ENCODE measurements at regions of chr3 and their contacts with region 1.

Region 1: DNA sequence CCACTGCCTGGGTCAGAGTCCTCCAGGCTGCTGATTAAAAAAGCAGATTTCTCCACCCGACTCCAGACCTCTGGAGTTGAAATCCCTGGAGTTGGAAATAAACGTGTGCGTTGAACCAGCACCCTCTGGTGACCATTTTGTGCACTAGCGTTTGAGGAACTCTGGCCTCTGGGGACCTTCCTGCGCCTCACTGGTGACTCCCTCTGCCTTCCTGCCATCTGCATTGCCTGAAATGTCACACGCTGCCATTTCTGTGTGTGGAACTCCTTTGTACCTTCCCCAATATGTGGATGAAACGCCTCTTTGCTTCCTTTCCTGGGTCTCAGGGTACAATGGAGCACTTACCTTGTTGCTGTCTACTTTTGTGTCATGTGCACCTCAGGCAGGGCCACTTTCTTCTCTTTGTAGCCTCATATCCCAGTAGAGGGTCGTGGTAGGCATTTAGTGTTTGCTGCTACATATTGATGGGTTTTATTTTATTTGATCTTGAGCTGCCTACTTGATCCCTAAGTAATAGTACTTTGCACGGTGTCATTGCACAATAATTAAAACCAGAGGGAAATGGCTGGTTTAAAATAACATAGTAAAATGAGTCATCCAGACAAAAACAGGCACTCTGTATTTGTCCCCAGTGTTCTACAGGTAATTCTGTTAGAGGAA is 56.8 kb downstream of the GPR171 start:
- DNase-seq: peak; percentile 25
- ATAC-seq: peak; percentile 94
- H3K4me3 ChIP-seq: no peak overlapping the region
- H3K27ac ChIP-seq: no peak overlapping the region
- H3K4me1 ChIP-seq: no peaks in the 10 kb centered on the region
- H3K27me3 ChIP-seq: peaks cover 2 to 3% of the 10 kb centered on the region in 2 experiments
- CTCF ChIP-seq: peak; percentile 83 to 90 (median 83)
- EP300 ChIP-seq: no peak
- POLR2A ChIP-seq: no peak
- RAD21 ChIP-seq: peak; percentile 74

Region 2: DNA sequence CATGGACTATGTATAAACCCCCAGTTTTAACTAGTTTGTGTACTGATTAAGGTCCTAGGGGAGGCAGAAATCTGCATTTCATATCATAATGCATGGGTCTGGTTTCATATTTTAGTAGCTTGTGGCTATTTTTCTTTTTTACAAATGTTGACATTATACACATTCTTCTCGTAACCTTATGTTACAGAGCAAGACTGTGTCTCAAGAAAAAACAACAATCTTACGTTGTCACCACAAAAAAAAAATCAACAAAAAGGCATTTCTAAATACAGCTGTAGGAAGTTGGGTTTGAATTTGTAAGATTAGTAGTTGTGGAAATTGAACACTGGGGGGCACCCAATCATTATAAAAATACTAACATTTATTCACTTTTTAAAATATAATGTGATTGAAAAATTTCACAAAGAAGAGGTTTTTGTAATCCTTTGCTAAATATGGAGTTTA is 617.8 kb before region 1 on chr3:
- CTCF ChIA-PET with region 1: interaction called, 3 read pairs
- POLR2A ChIA-PET with region 1: no interaction called
- RAD21 ChIA-PET with region 1: no interaction called
- SMC1A ChIA-PET with region 1: interaction called, 3 read pairs
- in situ Hi-C with region 1: loop called (anchors 25 kb)
- intact Hi-C with region 1: loop called (anchors 5 kb)
- DNase-seq: no peak
- ATAC-seq: peak; percentile 54
- H3K4me3 ChIP-seq: no peak overlapping the region
- H3K27ac ChIP-seq: no peak overlapping the region
- H3K4me1 ChIP-seq: no peaks in the 10 kb centered on the region
- H3K27me3 ChIP-seq: no peaks in the 10 kb centered on the region
- CTCF ChIP-seq: peak; percentile 13 to 48 (median 33); a peak in 4 of 6 replicates
- EP300 ChIP-seq: no peak
- POLR2A ChIP-seq: no peak
- RAD21 ChIP-seq: peak; percentile 48

Region 3: DNA sequence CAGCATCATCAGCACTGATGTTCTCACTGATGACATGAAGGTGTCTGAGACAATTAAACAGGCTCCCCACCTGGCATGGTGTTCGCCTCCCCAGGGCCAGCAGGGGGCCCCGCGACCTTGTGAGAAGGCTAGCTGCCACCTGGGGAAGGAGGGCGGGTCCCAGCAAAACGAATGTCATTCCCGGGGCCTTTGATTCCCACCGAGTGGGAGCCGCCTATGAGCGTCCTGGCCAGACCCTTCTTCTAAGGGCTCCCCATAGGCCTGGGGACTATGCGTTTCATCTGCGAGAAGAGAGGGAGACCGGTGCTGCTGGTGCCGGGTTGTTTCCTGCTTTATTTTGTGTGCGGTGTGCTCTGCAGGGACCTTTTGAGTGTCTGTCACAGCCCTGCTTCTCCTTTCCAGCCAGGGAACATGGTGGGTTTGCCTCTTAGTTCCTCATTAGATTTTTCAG is 220.4 kb before region 1 on chr3:
- CTCF ChIA-PET with region 1: interaction called, 11 read pairs
- POLR2A ChIA-PET with region 1: no interaction called
- RAD21 ChIA-PET with region 1: interaction called, 3 read pairs
- SMC1A ChIA-PET with region 1: no interaction called
- in situ Hi-C with region 1: loop called (anchors 10 kb)
- intact Hi-C with region 1: loop called (anchors 1 kb)
- DNase-seq: no peak
- ATAC-seq: peak; percentile 99
- H3K4me3 ChIP-seq: no peak overlapping the region
- H3K27ac ChIP-seq: no peak overlapping the region
- H3K4me1 ChIP-seq: no peaks in the 10 kb centered on the region
- H3K27me3 ChIP-seq: peaks cover 0 to 2% of the 10 kb centered on the region in 2 experiments; a peak in 1 of 4 replicates
- CTCF ChIP-seq: peak; percentile 62 to 82 (median 81)
- EP300 ChIP-seq: no peak
- POLR2A ChIP-seq: no peak
- RAD21 ChIP-seq: peak; percentile 74

Region 4: GRCh38 chr3:151067158-151067557 is 79.0 kb before region 1 on chr3:
- CTCF ChIA-PET with region 1: interaction called, 10 read pairs
- POLR2A ChIA-PET with region 1: no interaction called
- RAD21 ChIA-PET with region 1: interaction called, 3 read pairs
- SMC1A ChIA-PET with region 1: interaction called, 4 read pairs
- in situ Hi-C with region 1: no loop called
- intact Hi-C with region 1: loop called (anchors 1 kb)
- DNase-seq: no peak
- ATAC-seq: peak; percentile 69
- H3K4me3 ChIP-seq: no peak overlapping the region
- H3K27ac ChIP-seq: no peak overlapping the region
- H3K4me1 ChIP-seq: no peaks in the 10 kb centered on the region
- H3K27me3 ChIP-seq: no peaks in the 10 kb centered on the region
- CTCF ChIP-seq: peak; percentile 30 to 44 (median 34); a peak in 4 of 6 replicates
- EP300 ChIP-seq: no peak
- POLR2A ChIP-seq: no peak
- RAD21 ChIP-seq: peak; percentile 57

Region 5: DNA sequence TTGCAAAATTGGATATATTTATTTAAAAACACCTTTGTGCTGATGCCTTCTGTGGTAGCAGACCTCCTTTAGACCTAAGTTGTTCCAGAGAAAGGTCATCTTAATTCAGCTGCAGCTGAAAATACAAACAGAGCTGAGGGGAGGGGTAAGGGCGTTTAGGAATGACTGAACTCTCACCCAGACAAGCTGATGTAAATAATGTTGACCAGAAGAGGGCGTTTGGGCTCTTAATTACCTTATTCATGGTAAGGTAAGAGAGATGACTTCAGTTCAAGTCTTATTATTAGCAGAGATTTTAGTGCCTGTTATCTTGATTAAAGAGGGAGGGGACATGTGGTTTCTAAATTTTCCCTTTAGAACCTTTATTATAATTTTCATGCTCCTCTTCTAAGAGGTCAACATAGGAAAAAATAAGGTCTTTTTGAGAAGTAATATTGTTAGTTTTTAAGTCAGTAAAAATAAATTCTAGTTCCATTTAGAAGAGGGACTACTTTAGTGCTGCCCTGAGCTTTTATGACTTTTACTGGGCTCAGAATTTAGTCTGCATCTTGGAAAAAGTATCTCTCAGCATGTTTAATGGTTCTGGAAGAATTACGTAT is 10.5 kb after region 1 on chr3:
- CTCF ChIA-PET with region 1: interaction called, 14 read pairs
- POLR2A ChIA-PET with region 1: no interaction called
- RAD21 ChIA-PET with region 1: interaction called, 3 read pairs
- SMC1A ChIA-PET with region 1: interaction called, 5 read pairs
- in situ Hi-C with region 1: no loop called
- intact Hi-C with region 1: no loop called
- DNase-seq: no peak
- ATAC-seq: peak; percentile 96
- H3K4me3 ChIP-seq: no peak overlapping the region
- H3K27ac ChIP-seq: no peak overlapping the region
- H3K4me1 ChIP-seq: no peaks in the 10 kb centered on the region
- H3K27me3 ChIP-seq: no peaks in the 10 kb centered on the region
- CTCF ChIP-seq: peak; percentile 57 to 72 (median 60)
- EP300 ChIP-seq: no peak
- POLR2A ChIP-seq: no peak
- RAD21 ChIP-seq: peak; percentile 35

Measured in GM12878 (cell line).